ENCODE measurements at regions of chr13 and their contacts with region 1.

Region 1: GRCh38 chr13:55992145-55992544 is 1148.6 kb upstream of the PRR20A start:
- DNase-seq: no peak
- ATAC-seq: no peak
- H3K4me3 Mint-ChIP-seq: no peak overlapping the region
- H3K27ac Mint-ChIP-seq: no peak overlapping the region
- H3K4me1 Mint-ChIP-seq: no peaks in the 10 kb centered on the region
- H3K27me3 Mint-ChIP-seq: no peaks in the 10 kb centered on the region

Region 2: DNA sequence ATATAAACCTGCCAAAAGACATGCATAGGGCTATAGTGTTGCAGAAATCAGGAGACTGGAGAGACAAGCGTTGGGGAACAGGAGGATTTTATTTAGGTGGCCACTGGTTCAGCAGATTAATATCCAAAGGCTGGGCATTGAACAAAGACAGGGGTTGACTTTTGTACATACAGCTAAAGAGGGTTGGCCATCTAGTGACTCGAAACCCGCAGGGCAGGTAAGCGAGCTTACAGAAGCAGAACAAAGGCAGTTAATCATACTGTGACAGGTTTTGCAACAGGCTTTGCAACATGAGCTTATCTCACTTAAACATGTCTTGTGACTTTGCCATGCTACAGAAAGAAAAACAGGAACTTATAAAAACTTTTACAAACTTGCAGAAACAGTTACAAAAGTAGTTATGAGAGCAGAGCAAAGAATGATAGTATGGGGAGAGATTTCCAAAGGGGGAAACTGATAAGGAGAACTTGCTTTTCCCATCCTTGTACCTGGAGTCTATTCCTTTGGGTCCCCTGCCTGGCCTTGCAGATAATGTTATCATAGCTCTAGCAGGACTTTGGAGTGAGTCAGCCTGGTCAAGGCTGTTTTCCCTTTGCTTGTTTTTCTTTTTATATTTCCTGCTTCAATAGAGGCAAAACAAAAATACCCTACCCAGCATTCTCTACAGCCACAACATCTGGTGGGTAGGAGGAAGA is 1873.6 kb after region 1 on chr13:
- CTCF ChIA-PET with region 1: no interaction called
- POLR2A ChIA-PET with region 1: interaction called, 12 read pairs
- intact Hi-C with region 1: no loop called
- DNase-seq: no peak
- ATAC-seq: no peak
- H3K4me3 Mint-ChIP-seq: no peak overlapping the region
- H3K27ac Mint-ChIP-seq: no peak overlapping the region
- H3K4me1 Mint-ChIP-seq: no peaks in the 10 kb centered on the region
- H3K27me3 Mint-ChIP-seq: no peaks in the 10 kb centered on the region